ENCODE measurements at regions of chr1 and their contacts with region 1.

Region 1: GRCh38 chr1:198681831-198682759 is 43.3 kb downstream of the PTPRC start:
- DNase-seq: peak; percentile 48 to 96 (median 84)
- ATAC-seq: peak; percentile 72 to 81
- H3K4me3 Mint-ChIP-seq: peak overlapping the region; percentile 65 to 85 (median 80)
- H3K27ac Mint-ChIP-seq: peak overlapping the region; percentile 95 to 100 (median 99)
- H3K4me1 Mint-ChIP-seq: peaks cover 28 to 94% (median 75%) of the 10 kb centered on the region in 4 donors
- H3K27me3 Mint-ChIP-seq: no peaks in the 10 kb centered on the region

Region 2: DNA sequence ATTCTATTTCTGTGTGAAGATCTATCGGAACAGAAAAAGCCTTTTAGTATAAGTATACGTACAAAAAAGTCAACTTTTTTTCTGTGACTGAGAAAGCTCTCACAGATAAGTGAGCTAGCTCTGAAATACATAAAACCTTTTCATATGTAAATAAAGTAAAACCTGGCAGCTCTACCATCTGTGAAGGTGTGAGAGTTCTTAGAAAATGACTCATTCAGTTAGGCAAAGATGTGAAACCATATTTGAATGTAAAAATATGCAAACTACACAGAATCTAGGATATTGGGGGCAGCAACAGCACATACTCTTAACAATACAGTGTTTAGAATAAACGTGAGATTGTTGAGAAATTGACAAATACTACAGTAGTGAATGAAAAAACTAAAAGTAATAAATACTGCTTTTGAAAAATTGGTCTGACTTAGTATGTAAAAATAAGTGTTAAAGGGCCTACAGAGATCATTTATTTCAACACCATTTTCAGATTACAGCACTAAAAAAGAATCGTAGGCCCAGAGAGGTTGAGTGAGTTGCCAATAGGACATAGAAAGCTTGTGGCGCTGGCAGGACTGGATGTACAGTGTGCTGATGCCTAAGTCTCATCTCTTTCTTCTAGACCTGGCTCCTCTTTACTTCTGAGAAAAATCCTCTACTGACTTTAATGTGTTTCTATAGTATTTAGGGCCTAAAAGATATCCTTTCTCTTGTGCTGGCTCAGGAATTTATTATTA is 161.4 kb before region 1 on chr1:
- POLR2A ChIA-PET with region 1: interaction called, 44 read pairs
- DNase-seq: peak in 2 of 10 donors; percentile 14 to 25
- ATAC-seq: peak; percentile 17 to 62
- H3K4me3 Mint-ChIP-seq: peak overlapping the region; percentile 41 to 74 (median 62)
- H3K27ac Mint-ChIP-seq: peak overlapping the region; percentile 60 to 97 (median 88)
- H3K4me1 Mint-ChIP-seq: peaks cover 30 to 72% (median 62%) of the 10 kb centered on the region in 4 donors
- H3K27me3 Mint-ChIP-seq: no peaks in the 10 kb centered on the region

Region 3: GRCh38 chr1:198528376-198528775 is 153.7 kb before region 1 on chr1:
- POLR2A ChIA-PET with region 1: interaction called, 44 read pairs
- DNase-seq: no peak
- ATAC-seq: no peak
- H3K4me3 Mint-ChIP-seq: no peak overlapping the region
- H3K27ac Mint-ChIP-seq: no peak overlapping the region
- H3K4me1 Mint-ChIP-seq: peaks cover 30 to 69% (median 67%) of the 10 kb centered on the region in 4 donors
- H3K27me3 Mint-ChIP-seq: no peaks in the 10 kb centered on the region

Region 4: DNA sequence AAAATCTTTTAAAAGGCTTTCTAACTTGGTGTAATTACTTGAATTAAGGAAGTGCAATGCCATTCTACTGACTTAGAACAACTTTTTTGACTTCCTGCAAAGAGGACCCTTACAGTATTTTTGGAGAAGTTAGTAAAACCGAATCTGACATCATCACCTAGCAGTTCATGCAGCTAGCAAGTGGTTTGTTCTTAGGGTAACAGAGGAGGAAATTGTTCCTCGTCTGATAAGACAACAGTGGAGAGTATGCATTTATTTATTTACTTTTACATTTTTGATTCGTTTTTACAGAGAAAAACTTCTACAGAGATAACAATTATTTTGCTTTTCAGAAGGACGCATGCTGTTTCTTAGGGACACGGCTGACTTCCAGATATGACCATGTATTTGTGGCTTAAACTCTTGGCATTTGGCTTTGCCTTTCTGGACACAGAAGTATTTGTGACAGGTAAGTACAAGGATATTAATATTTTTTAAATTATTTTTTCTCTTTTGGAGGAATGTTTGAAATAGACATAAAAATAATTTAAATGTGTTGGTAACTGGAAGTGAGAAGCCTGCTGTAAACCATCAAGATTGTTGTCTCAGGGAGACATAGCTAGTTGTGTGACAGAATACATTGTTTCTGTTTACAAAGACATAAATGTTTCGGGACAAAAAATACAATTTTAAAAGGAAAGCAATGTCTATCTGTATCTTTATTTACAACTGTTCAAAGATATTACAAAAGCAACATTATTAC is 43.0 kb before region 1 on chr1 and contains the start of gene PTPRC:
- POLR2A ChIA-PET with region 1: interaction called, 26 read pairs
- DNase-seq: peak in 5 of 10 donors; percentile 51 to 76 (median 61)
- ATAC-seq: peak; percentile 70 to 83
- H3K4me3 Mint-ChIP-seq: peak within 1 kb of the TSS; percentile 84 to 99 (median 90)
- H3K27ac Mint-ChIP-seq: peak within 1 kb of the TSS; percentile 87 to 99 (median 92)
- H3K4me1 Mint-ChIP-seq: peaks cover 34 to 67% (median 50%) of the 10 kb centered on the region in 4 donors
- H3K27me3 Mint-ChIP-seq: no peaks in the 10 kb centered on the region
- polyA plus RNA-seq, gene PTPRC: 980 to 1,253 (median 1,023) TPM

Region 5: GRCh38 chr1:198651650-198652400 is 30.3 kb before region 1 on chr1:
- POLR2A ChIA-PET with region 1: interaction called, 48 read pairs
- DNase-seq: no peak
- ATAC-seq: peak; percentile 13 to 16
- H3K4me3 Mint-ChIP-seq: peak overlapping the region; percentile 75 to 91 (median 85)
- H3K27ac Mint-ChIP-seq: peak overlapping the region; percentile 83 to 99 (median 96)
- H3K4me1 Mint-ChIP-seq: peaks cover 34 to 83% (median 63%) of the 10 kb centered on the region in 4 donors
- H3K27me3 Mint-ChIP-seq: no peaks in the 10 kb centered on the region

Region 6: GRCh38 chr1:198657550-198658064 is 24.5 kb before region 1 on chr1:
- POLR2A ChIA-PET with region 1: interaction called, 41 read pairs
- DNase-seq: peak in 6 of 10 donors; percentile 24 to 72 (median 49)
- ATAC-seq: peak; percentile 30 to 59
- H3K4me3 Mint-ChIP-seq: peak overlapping the region; percentile 61 to 85 (median 79)
- H3K27ac Mint-ChIP-seq: peak overlapping the region; percentile 83 to 99 (median 97)
- H3K4me1 Mint-ChIP-seq: peaks cover 29 to 79% (median 56%) of the 10 kb centered on the region in 4 donors
- H3K27me3 Mint-ChIP-seq: no peaks in the 10 kb centered on the region

Region 7: GRCh38 chr1:198669023-198669698 is 12.9 kb before region 1 on chr1:
- POLR2A ChIA-PET with region 1: interaction called, 108 read pairs
- DNase-seq: peak in 2 of 10 donors; percentile 41 to 59
- ATAC-seq: peak; percentile 68 to 70
- H3K4me3 Mint-ChIP-seq: peak overlapping the region; percentile 31 to 78 (median 70)
- H3K27ac Mint-ChIP-seq: peak overlapping the region; percentile 89 to 99 (median 94)
- H3K4me1 Mint-ChIP-seq: peaks cover 46 to 92% (median 83%) of the 10 kb centered on the region in 4 donors
- H3K27me3 Mint-ChIP-seq: no peaks in the 10 kb centered on the region